ENCODE measurements at regions of chr16 and their contacts with region 1.

Region 1: GRCh38 chr16:72856797-72857196 is 191.1 kb downstream of the ZFHX3 start:
- DNase-seq: no peak
- H3K4me3 Mint-ChIP-seq: no peak overlapping the region
- H3K27ac Mint-ChIP-seq: no peak overlapping the region
- H3K4me1 Mint-ChIP-seq: peaks cover 6% of the 10 kb centered on the region
- H3K27me3 Mint-ChIP-seq: peaks cover 16% of the 10 kb centered on the region

Region 2: DNA sequence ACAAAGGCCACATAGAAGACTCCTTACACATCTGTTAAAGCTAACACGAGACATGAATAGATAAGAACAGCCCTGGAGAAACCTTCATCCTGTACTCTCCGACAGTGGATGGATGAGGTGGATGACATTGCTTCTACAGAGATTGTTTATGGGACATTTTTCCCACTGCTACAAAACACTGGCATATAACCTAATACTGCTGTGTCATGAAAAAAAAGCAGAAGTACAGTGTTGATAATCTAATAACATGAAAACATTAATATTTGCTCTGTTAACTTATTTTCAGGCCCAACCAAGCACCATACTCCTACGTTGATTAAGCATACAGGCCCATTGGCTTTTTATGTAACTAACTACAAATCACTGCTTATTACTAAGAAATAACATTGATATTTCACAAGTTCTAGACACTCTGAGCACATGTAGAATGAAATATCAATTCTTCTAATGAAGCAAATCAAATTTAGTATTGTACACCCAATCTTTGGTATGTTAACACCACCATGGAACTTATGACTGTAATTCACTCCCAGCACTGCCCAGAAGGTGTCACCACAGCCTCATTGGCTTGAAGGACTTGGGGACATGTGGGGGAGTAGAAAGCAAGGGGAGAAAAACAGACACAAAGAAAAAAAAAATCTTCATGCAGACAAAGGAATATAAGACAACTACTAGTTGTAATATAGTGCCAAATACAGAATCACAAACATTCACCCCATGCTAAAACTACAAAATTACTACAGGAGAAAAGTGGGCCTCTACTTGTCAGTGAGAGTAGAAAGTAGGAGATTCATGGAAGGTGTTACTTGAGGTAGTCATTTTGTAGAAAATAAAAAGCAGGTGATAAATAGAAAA is 354.8 kb before region 1 on chr16:
- intact Hi-C with region 1: loop called (anchors 5 kb)
- DNase-seq: no peak
- H3K4me3 Mint-ChIP-seq: no peak overlapping the region
- H3K27ac Mint-ChIP-seq: no peak overlapping the region
- H3K4me1 Mint-ChIP-seq: no peaks in the 10 kb centered on the region
- H3K27me3 Mint-ChIP-seq: no peaks in the 10 kb centered on the region

Region 3: DNA sequence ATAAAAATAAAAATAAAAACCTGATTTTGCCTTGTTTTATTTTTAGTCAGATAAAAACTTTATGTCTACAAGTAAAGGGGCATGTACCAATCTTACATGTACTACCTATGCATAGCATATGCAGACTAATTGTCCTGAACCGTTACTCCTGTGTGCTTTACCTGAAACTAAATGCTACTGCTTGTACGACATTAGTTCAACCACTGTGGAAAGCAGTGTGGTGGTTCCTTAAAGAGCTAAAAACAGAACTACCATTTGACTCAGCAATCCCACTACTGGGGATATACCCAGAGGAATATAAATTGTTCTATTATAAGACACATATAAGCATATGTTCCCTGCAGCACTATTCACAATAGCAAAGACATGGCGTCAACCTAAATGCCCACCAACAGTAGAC is 258.9 kb before region 1 on chr16:
- intact Hi-C with region 1: no loop called
- DNase-seq: no peak
- H3K4me3 Mint-ChIP-seq: no peak overlapping the region
- H3K27ac Mint-ChIP-seq: no peak overlapping the region
- H3K4me1 Mint-ChIP-seq: no peaks in the 10 kb centered on the region
- H3K27me3 Mint-ChIP-seq: no peaks in the 10 kb centered on the region

Region 4: DNA sequence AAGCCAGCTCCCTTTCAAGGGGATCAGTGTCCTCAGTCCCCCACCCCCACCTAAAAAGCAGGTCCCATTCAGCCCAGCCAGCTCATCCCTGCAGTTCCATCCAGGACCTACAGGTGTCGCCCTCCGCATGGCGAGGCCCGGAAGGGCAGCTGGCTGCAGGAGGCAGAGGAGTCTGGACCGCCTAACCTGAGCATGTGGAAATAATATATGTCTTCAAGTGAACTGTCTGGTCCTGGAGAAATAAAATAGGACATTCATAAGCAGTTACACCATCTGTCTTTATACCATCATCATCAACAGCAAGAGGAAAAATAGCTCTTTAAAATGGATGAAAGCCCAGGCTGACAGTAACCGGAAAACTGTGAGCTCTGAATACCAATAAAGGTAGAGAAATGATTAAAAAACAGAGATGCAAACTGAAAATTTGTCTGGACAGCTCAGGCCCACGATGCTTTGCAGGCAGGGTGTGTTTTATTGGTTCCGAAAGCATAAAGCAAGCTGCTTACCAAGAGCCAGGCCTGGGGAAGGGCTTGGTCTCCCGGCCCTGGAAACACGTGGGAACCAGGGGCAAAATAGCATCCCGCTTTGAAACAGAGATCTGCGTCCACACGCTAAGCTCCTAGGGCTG is 24.1 kb before region 1 on chr16:
- intact Hi-C with region 1: no loop called
- DNase-seq: peak; percentile 41
- H3K4me3 Mint-ChIP-seq: no peak overlapping the region
- H3K27ac Mint-ChIP-seq: no peak overlapping the region
- H3K4me1 Mint-ChIP-seq: peaks cover 4% of the 10 kb centered on the region
- H3K27me3 Mint-ChIP-seq: peaks cover 3% of the 10 kb centered on the region

Region 5: DNA sequence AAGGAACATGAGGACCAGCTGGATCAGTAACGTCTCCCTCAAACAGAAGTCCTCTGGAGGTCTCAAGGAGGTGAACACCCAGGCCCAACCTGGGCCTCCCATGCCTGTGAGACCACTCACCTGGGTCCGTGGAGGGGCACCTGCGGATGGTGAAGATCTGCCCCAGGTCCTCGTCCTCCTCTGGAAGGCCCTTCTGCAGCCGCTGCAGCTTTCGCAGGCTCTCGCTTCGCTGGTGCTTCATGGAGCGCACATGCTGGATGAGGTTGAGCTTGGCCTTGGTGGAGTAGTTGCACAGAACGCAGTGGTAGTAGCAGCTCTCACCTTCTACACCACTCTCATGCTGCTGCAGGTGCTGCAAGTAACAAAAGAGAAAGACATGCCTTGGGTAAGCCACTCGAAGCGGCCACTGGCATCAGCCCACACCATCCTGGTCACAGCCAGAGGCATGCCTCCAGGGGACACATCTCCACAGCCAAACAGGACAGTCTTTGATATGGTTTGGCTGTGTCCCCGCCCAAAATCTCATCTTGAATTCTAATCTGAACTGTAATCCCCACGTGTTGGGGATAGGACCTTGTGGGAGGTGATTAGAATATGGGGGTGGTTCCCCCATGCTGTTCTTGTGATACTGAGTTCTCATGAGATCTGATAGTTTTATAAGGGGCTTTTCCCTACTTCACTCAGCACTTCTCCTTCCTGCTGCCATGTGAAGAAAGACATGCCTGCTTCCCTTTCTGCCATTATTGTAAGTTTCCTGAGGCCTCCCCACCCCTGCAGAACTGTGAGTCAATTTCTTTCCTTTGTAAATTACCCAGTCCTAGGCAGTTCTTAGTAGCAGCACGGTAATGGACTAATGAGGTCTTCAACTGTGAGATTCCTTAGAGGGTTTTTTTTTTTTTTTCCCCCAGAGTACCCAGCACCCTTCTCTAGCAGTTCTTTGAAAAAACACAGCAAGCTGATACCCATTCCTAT is 33.1 kb after region 1 on chr16:
- intact Hi-C with region 1: no loop called
- DNase-seq: no peak
- H3K4me3 Mint-ChIP-seq: no peak overlapping the region
- H3K27ac Mint-ChIP-seq: no peak overlapping the region
- H3K4me1 Mint-ChIP-seq: no peaks in the 10 kb centered on the region
- H3K27me3 Mint-ChIP-seq: no peaks in the 10 kb centered on the region

Region 6: GRCh38 chr16:72903176-72903575 is 46.4 kb after region 1 on chr16:
- intact Hi-C with region 1: loop called (anchors 1 kb)
- DNase-seq: no peak
- H3K4me3 Mint-ChIP-seq: no peak overlapping the region
- H3K27ac Mint-ChIP-seq: no peak overlapping the region
- H3K4me1 Mint-ChIP-seq: no peaks in the 10 kb centered on the region
- H3K27me3 Mint-ChIP-seq: peaks cover 2% of the 10 kb centered on the region